ENCODE measurements at regions of chr4 and their contacts with region 1.

Region 1: GRCh38 chr4:55321707-55322264 is 24.3 kb upstream of the SRD5A3 start:
- DNase-seq: peak; percentile 34
- ATAC-seq: peak; percentile 50

Region 2: DNA sequence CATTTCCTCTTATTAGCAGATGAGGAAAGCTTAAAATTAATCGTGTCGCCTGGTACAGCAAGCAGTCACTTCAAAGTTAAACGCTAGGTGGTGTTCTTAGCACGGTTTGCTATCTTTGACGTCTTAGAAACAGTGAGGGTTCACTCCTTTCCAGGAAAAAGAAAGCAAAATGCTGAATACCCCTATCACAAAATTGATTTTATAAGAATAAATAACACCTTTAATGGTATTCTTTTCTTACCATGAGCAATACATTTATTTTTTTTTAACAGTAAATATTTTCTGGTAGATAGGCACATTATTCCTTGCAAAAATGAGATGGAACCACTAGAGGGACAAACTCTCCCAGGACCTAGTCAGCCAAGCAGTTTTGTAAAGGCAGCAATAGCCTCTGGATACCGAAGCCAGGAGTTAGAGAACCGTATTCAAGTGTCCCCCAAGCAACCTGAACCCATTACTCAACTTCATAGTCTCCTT is 350.3 kb before region 1 on chr4:
- intact Hi-C with region 1: loop called (anchors 2 kb)
- DNase-seq: no peak
- ATAC-seq: peak; percentile 78